HCT116 (cell line): ENCODE measurements at regions of chr18 and their contacts with region 1.

Region 1: GRCh38 chr18:60935041-60935910 is 398.0 kb upstream of the CDH20 start:
- DNase-seq: no peak
- ATAC-seq: no peak
- H3K4me3 ChIP-seq: no peak overlapping the region
- H3K27ac ChIP-seq: no peak overlapping the region
- H3K4me1 ChIP-seq: no peaks in the 10 kb centered on the region
- H3K27me3 ChIP-seq: no peaks in the 10 kb centered on the region
- CTCF ChIP-seq: no peak
- POLR2A ChIP-seq: no peak
- RAD21 ChIP-seq: no peak

Region 2: DNA sequence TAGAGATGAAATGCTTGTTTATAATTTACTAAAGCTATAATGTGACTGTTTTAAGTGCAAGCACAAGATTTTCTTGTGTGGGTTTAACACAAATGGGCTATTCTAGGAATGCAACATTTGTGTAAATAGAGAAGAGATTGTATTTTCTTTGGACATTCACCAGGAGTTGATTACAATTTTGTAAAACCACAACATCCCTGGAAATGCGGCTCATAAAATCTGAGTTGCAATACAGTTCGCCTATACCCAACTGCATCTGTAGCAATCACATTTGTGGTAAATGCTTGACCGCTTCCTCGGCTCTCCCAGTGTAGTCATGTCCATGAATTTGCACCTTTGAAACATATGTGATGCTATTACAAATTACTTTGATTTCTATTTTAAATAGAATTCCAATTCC is 49.2 kb after region 1 on chr18:
- CTCF ChIA-PET with region 1: no interaction called
- POLR2A ChIA-PET with region 1: no interaction called
- RAD21 ChIA-PET with region 1: no interaction called
- intact Hi-C with region 1: loop called (anchors 2 kb)
- DNase-seq: no peak
- ATAC-seq: no peak
- H3K4me3 ChIP-seq: no peak overlapping the region
- H3K27ac ChIP-seq: no peak overlapping the region
- H3K4me1 ChIP-seq: no peaks in the 10 kb centered on the region
- H3K27me3 ChIP-seq: no peaks in the 10 kb centered on the region
- CTCF ChIP-seq: no peak
- POLR2A ChIP-seq: no peak
- RAD21 ChIP-seq: no peak

Region 3: GRCh38 chr18:61169386-61169785 is 234.1 kb after region 1 on chr18:
- CTCF ChIA-PET with region 1: no interaction called
- POLR2A ChIA-PET with region 1: no interaction called
- RAD21 ChIA-PET with region 1: no interaction called
- intact Hi-C with region 1: no loop called
- DNase-seq: no peak
- ATAC-seq: no peak
- H3K4me3 ChIP-seq: no peak overlapping the region
- H3K27ac ChIP-seq: no peak overlapping the region
- H3K4me1 ChIP-seq: no peaks in the 10 kb centered on the region
- H3K27me3 ChIP-seq: 0 out of 2 replicates have a peak, but pooled peaks cover 2% of the 10 kb centered on the region
- CTCF ChIP-seq: no peak
- POLR2A ChIP-seq: no peak
- RAD21 ChIP-seq: no peak